Ascending aorta (tissue), 2 donors: ENCODE measurements at regions of chr11 and their contacts with region 1.

Region 1: DNA sequence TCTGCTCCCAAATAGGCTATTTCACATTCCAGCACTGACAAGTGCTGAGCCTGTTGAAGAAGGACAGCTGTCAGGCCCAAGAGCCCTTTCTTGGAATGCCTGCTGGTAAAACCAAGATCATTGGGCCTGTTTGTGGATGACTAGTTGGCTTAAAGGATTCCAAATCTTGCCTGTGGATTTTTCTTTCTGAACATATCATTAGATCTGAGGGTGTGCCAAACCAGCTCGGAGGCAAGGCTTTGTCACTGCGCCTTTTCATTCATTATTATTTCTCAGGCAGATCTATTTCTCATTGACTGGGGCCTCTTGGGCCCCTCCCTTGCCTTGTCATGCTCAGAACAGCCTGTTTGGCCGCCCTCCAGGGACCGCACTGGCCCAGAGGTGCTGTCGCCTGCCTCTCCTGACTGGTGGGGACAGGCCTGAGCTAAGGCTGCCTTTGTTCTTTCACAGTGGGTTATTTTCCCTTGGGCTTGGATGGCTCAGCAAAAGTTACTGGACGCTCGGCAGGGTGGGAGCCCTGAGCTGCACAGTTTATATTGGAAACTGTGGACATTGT is 222.7 kb upstream of the SESN3 start:
- DNase-seq: peak in 1 of 2 donors; percentile 79
- H3K4me3 ChIP-seq: no peak overlapping the region
- H3K27ac ChIP-seq: peak overlapping the region; percentile 71 to 74
- H3K4me1 ChIP-seq: peaks cover 0 to 17% of the 10 kb centered on the region in 2 donors
- H3K27me3 ChIP-seq: no peaks in the 10 kb centered on the region
- CTCF ChIP-seq: no peak

Region 2: GRCh38 chr11:95577716-95578460 is 124.2 kb after region 1 on chr11:
- intact Hi-C with region 1: loop called (anchors 5 kb)
- DNase-seq: peak in 1 of 2 donors; percentile 67
- H3K4me3 ChIP-seq: no peak overlapping the region
- H3K27ac ChIP-seq: no peak overlapping the region
- H3K4me1 ChIP-seq: peaks cover 0 to 21% of the 10 kb centered on the region in 2 donors
- H3K27me3 ChIP-seq: no peaks in the 10 kb centered on the region
- CTCF ChIP-seq: no peak